ENCODE measurements at regions of chr20 and their contacts with region 1.

Region 1: DNA sequence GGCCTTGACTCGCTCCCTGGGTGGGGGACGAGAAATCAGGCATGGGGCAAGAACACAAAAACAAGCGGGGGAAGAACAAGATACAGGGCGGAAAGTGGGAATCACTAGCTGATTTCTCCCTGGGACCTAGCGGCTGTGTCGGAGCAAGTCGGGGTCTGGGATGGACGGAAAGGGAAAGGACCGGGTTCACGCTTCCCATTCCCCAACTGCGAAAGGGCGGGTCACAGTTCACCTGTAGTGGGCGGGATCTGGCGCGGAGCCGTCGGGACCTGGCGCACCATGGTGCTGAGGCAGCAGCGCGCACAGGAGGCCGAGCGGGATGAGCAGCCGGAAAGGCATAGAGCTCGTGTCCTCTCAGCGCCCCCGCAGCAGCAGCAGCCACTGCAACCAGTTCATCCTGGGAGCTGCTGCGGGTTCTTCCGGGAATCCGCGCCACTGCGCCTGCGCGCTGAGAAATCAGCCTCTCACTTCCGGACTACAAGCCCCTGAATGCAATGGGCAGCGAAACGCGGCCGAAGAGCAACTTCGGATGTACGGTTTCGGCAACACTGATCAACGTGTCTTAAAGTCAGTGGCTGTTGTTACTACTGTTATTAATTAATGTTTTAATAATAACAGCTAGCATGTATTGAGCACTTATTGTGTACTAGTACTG is at the start of gene EDEM2:
- DNase-seq: peak; percentile 89 to 90
- H3K4me3 ChIP-seq: peak within 1 kb of the TSS; percentile 61 to 86 (median 79)
- H3K27ac ChIP-seq: peak within 1 kb of the TSS; percentile 82 to 91
- H3K4me1 ChIP-seq: peaks cover 0 to 5% of the 10 kb centered on the region in 2 donors
- H3K27me3 ChIP-seq: no peaks in the 10 kb centered on the region
- CTCF ChIP-seq: peak in 1 of 3 donors; percentile 12
- POLR2A ChIP-seq: peak; percentile 31
- total RNA-seq, gene EDEM2: 19.3 to 25.8 (median 22.4) TPM

Region 2: GRCh38 chr20:35104685-35105295 is 42.3 kb before region 1 on chr20:
- intact Hi-C with region 1: loop called (anchors 2 kb)
- DNase-seq: no peak
- H3K4me3 ChIP-seq: no peak overlapping the region
- H3K27ac ChIP-seq: no peak overlapping the region
- H3K4me1 ChIP-seq: no peaks in the 10 kb centered on the region
- H3K27me3 ChIP-seq: no peaks in the 10 kb centered on the region
- CTCF ChIP-seq: no peak
- POLR2A ChIP-seq: no peak

Region 3: GRCh38 chr20:35207950-35208611 is 61.0 kb after region 1 on chr20:
- intact Hi-C with region 1: loop called (anchors 5 kb)
- DNase-seq: peak; percentile 55 to 66
- H3K4me3 ChIP-seq: peak overlapping the region in 2 of 3 donors; percentile 6 to 45
- H3K27ac ChIP-seq: peak overlapping the region; percentile 66 to 73
- H3K4me1 ChIP-seq: no peaks in the 10 kb centered on the region
- H3K27me3 ChIP-seq: no peaks in the 10 kb centered on the region
- CTCF ChIP-seq: peak; percentile 83 to 93 (median 84)
- POLR2A ChIP-seq: no peak

Region 4: GRCh38 chr20:35277531-35278395 is 130.7 kb after region 1 on chr20 and contains the start of gene MMP24OS:
- intact Hi-C with region 1: loop called (anchors 10 kb)
- DNase-seq: peak; percentile 90
- H3K4me3 ChIP-seq: peak within 1 kb of the TSS; percentile 79 to 88 (median 83)
- H3K27ac ChIP-seq: peak within 1 kb of the TSS; percentile 98 to 100
- H3K4me1 ChIP-seq: peaks cover 0 to 6% of the 10 kb centered on the region in 2 donors
- H3K27me3 ChIP-seq: no peaks in the 10 kb centered on the region
- CTCF ChIP-seq: peak in 2 of 3 donors; percentile 10 to 24
- POLR2A ChIP-seq: peak; percentile 83
- total RNA-seq, gene MMP24OS: 17.4 to 34.1 (median 32.9) TPM

Measured in breast epithelium (tissue), 4 donors.